Natural killer cell (primary cell): ENCODE measurements at regions of chr10 and their contacts with region 1.

Region 1: DNA sequence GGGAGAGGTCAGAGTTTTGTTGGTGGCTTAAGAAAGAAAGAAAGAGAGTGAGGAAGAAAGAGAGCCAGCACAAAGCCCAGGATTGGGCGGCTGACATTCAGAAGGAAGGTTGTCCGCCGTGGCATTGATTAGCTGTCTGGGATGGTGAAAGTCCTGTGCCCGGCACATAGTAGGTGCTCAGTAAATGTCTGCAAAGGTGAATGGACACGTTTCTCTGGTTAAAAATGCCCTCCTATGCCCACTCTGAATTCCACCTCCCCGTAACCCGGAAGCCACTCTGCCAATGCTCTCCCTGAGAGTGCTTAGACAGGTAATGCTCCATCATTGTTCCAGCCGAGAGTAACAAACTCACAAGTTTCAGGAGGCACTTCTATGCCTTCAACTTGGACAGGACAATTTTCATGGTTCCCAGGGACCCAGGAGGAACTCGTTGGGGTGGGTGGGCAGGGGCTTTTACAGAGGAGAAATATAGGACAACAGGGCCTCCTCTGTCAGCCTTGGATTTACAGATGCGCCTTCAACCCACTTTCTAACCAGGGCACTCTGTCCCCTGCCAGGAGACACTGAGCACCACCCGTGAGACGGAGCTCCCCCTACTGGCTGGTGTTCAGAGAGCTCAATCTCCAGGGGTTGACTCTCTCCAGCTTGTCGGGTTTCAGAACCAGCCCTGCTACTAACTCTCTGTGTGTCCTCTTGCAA is 411.5 kb upstream of the ZMIZ1 start:
- DNase-seq: peak; percentile 44 to 70
- ATAC-seq: peak in 2 of 3 donors; percentile 73 to 81
- H3K4me3 ChIP-seq: no peak overlapping the region
- H3K4me3 Mint-ChIP-seq: no peak overlapping the region
- H3K27ac ChIP-seq: no peak overlapping the region
- H3K27ac Mint-ChIP-seq: no peak overlapping the region
- H3K4me1 ChIP-seq: no peaks in the 10 kb centered on the region
- H3K4me1 Mint-ChIP-seq: no peaks in the 10 kb centered on the region
- H3K27me3 ChIP-seq: no peaks in the 10 kb centered on the region
- H3K27me3 Mint-ChIP-seq: peaks cover 15 to 26% of the 10 kb centered on the region in 2 donors
- CTCF ChIP-seq: peak; percentile 63

Region 2: GRCh38 chr10:78211561-78212051 is 445.7 kb before region 1 on chr10:
- intact Hi-C with region 1: loop called (anchors 5 kb)
- DNase-seq: peak in 1 of 2 donors; percentile 31
- ATAC-seq: no peak
- H3K4me3 ChIP-seq: no peak overlapping the region
- H3K4me3 Mint-ChIP-seq: no peak overlapping the region
- H3K27ac ChIP-seq: no peak overlapping the region
- H3K27ac Mint-ChIP-seq: no peak overlapping the region
- H3K4me1 ChIP-seq: no peaks in the 10 kb centered on the region
- H3K4me1 Mint-ChIP-seq: no peaks in the 10 kb centered on the region
- H3K27me3 ChIP-seq: no peaks in the 10 kb centered on the region
- H3K27me3 Mint-ChIP-seq: peaks cover 15 to 20% of the 10 kb centered on the region in 2 donors
- CTCF ChIP-seq: no peak

Region 3: DNA sequence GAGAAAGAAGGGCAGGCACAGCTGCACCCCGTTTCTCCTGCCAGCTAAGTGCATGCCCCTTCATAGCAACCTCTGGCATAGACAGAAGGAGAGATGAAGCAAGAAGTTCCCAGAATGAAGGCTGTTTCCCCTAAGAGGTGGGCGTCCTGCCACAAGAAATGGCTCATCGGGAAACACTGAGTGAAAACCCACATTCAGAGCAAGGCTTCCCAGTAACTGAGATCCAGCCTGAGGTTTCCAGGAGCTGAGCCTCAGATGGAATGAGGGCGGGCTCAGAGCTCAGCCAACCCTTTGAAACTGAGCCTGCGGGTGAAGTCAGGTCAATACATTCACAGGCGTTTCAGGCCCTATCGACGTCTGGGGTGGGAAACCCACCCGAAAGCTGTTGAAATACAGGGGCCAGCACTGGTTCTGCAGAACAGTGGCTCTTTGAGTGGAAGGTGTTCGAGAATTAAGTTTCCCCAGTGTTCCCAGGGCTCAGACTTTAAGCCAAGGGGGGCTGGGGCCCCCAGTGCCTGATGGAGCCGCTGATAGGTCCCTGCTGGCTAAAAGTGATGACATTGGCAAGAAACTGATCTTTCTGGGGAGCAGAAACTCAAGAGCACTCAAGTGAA is 113.5 kb before region 1 on chr10:
- intact Hi-C with region 1: no loop called
- DNase-seq: no peak
- ATAC-seq: no peak
- H3K4me3 ChIP-seq: no peak overlapping the region
- H3K4me3 Mint-ChIP-seq: no peak overlapping the region
- H3K27ac ChIP-seq: no peak overlapping the region
- H3K27ac Mint-ChIP-seq: no peak overlapping the region
- H3K4me1 ChIP-seq: no peaks in the 10 kb centered on the region
- H3K4me1 Mint-ChIP-seq: peaks cover 9 to 12% of the 10 kb centered on the region in 2 donors
- H3K27me3 ChIP-seq: no peaks in the 10 kb centered on the region
- H3K27me3 Mint-ChIP-seq: peaks cover 10 to 15% of the 10 kb centered on the region in 2 donors
- CTCF ChIP-seq: no peak